ENCODE measurements at regions of chr19 and their contacts with region 1.

Region 1: DNA sequence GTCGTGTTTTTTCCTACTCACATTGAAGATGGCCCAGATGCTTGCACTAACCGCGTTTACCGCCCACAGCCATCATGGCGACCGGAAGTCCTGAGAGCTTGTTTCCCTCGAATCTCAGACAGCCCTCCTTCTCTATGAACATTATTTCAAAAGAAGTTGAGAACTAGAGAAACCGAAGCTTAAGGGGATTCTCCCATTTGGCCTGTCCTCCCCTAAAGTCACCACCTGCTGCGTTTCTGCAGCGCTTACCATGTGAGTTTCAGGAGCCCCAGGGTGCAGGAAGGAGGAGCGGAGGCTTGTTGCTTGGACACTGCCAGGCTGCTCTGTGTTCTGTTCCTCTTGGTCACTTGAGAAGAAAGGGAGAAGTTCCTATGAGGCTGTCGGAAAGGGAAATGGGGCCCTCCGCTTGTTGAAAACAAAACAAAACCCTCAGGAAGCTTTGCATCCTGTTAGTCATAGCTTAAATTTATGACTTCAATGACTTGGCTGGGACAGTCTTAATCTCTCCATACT is 6.2 kb downstream of the CARD8 start:
- DNase-seq: peak; percentile 91
- ATAC-seq: peak; percentile 81
- H3K4me3 Mint-ChIP-seq: peak overlapping the region; percentile 84
- H3K27ac Mint-ChIP-seq: peak overlapping the region; percentile 93
- H3K4me1 Mint-ChIP-seq: peaks cover 76% of the 10 kb centered on the region
- H3K27me3 Mint-ChIP-seq: no peaks in the 10 kb centered on the region

Region 2: GRCh38 chr19:47881757-47882156 is 367.8 kb before region 1 on chr19:
- CTCF ChIA-PET with region 1: no interaction called
- POLR2A ChIA-PET with region 1: no interaction called
- intact Hi-C with region 1: no loop called
- DNase-seq: no peak
- ATAC-seq: no peak
- H3K4me3 Mint-ChIP-seq: no peak overlapping the region
- H3K27ac Mint-ChIP-seq: no peak overlapping the region
- H3K4me1 Mint-ChIP-seq: no peaks in the 10 kb centered on the region
- H3K27me3 Mint-ChIP-seq: peaks cover 15% of the 10 kb centered on the region

Region 3: GRCh38 chr19:48203732-48204628 is 45.6 kb before region 1 on chr19:
- CTCF ChIA-PET with region 1: interaction called, 5 read pairs
- POLR2A ChIA-PET with region 1: interaction called, 15 read pairs
- intact Hi-C with region 1: loop called (anchors 2 to 5 kb)
- DNase-seq: peak; percentile 97
- ATAC-seq: peak; percentile 100
- H3K4me3 Mint-ChIP-seq: no peak overlapping the region
- H3K27ac Mint-ChIP-seq: no peak overlapping the region
- H3K4me1 Mint-ChIP-seq: peaks cover 16% of the 10 kb centered on the region
- H3K27me3 Mint-ChIP-seq: no peaks in the 10 kb centered on the region